ENCODE measurements at regions of chrX and their contacts with region 1.

Region 1: GRCh38 chrX:24150051-24150790 is 692 bp downstream of the ZFX start:
- DNase-seq: peak; percentile 76
- H3K4me3 Mint-ChIP-seq: peak overlapping the region; percentile 95
- H3K27ac Mint-ChIP-seq: peak overlapping the region; percentile 92
- H3K4me1 Mint-ChIP-seq: peaks cover 64% of the 10 kb centered on the region
- H3K27me3 Mint-ChIP-seq: no peaks in the 10 kb centered on the region

Region 2: DNA sequence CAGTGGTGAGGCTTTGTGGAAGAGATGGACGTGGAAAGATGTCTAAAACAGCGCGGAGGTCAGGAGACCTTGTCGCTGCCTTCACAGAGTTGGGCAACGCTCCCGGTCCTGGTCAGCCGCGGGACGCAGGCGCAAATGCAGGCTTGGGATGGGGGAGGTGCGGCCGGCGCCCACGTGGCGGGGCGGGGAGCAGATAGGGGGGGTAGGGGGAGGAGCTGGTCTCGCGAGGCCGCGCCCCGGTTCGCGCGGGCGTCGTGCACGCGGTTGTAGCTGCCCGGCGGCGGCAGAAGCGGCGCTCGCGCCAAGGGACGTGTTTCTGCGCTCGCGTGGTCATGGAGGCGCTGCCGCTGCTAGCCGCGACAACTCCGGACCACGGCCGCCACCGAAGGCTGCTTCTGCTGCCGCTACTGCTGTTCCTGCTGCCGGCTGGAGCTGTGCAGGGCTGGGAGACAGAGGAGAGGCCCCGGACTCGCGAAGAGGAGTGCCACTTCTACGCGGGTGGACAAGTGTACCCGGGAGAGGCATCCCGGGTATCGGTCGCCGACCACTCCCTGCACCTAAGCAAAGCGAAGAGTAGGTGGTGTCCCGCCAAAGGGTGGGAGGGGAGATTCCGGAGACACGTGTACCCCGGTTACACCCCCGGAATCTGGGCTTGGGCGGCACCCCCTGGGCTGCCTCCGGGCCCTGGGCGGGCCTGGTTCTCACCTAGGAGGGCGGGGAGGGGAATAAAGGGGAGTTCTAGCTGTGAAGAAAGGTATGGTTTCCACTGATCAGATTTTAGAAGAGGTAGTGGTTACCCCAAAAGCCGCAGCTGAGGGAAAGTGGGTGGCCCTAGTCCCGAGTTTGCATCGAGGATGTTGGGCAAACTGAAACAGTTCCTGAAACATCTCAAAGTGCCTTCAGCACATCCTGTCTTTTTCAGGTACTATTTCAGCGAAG is 482.7 kb before region 1 on chrX and contains the start of gene PRDX4:
- intact Hi-C with region 1: loop called (anchors 5 kb)
- DNase-seq: peak; percentile 66
- H3K4me3 Mint-ChIP-seq: peak within 1 kb of the TSS; percentile 88
- H3K27ac Mint-ChIP-seq: peak within 1 kb of the TSS; percentile 94
- H3K4me1 Mint-ChIP-seq: peaks cover 37% of the 10 kb centered on the region
- H3K27me3 Mint-ChIP-seq: no peaks in the 10 kb centered on the region
- total RNA-seq, gene PRDX4: 75.5 and 83.2 TPM in 2 replicates

Region 3: GRCh38 chrX:23907498-23908218 is 242.6 kb before region 1 on chrX and contains the starts of genes APOO and CXorf58:
- intact Hi-C with region 1: loop called (anchors 1 kb)
- DNase-seq: peak; percentile 88
- H3K4me3 Mint-ChIP-seq: peak within 1 kb of the TSS; percentile 85
- H3K27ac Mint-ChIP-seq: peak within 1 kb of the TSS; percentile 89
- H3K4me1 Mint-ChIP-seq: peaks cover 13% of the 10 kb centered on the region
- H3K27me3 Mint-ChIP-seq: no peaks in the 10 kb centered on the region
- total RNA-seq, gene APOO: 29.0 and 30.0 TPM in 2 replicates
- total RNA-seq, gene CXorf58: not detected in 2 replicates

Region 4: DNA sequence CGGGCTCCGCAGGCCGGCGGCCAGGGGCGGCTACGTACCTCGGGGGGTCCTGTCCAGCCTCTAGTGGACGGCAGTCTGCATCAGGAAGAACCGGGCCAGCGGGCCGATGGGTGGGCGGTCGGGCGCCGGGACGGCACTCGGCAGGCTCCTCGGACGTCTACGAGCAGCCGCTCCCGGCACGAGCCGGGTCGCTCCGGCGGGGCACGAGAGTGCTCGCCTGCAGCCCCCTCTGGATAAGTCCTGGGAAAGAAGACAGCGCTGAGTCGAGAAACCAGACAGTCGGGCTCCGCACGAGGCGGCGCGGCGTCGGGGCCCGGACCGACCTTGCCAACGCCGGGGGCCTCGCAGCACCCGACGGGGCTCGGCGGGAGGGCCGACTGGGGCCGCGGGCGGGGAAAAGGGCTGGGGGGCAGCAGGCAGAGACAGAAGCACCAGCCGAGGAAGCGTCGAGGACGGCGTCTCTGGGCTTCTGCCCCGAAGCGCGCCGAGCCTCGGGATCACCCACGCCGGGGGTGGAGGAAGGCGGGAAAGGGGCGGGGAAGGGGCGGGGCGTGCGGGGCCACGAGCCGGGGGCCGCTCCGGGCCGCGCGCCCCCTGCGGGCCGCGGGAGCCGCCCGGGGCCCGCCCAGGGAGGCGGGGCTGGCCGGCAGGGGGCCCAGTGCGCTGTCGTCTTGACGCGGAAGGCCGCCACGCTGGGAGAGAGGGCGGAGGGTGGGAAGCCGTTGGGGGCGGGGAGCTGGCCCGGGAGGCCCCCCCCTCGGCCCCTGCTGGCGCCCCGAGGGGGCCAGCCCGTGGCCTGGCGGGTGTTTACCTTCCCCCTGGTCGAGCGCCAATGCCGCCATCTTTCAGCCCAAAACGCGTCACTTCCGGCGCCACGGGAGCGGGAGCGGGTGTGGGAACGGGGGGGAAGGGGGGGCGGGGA is 125.1 kb before region 1 on chrX:
- intact Hi-C with region 1: loop called (anchors 1 kb)
- DNase-seq: peak; percentile 72
- H3K4me3 Mint-ChIP-seq: peak overlapping the region; percentile 92
- H3K27ac Mint-ChIP-seq: peak overlapping the region; percentile 88
- H3K4me1 Mint-ChIP-seq: peaks cover 25% of the 10 kb centered on the region
- H3K27me3 Mint-ChIP-seq: no peaks in the 10 kb centered on the region

Region 5: DNA sequence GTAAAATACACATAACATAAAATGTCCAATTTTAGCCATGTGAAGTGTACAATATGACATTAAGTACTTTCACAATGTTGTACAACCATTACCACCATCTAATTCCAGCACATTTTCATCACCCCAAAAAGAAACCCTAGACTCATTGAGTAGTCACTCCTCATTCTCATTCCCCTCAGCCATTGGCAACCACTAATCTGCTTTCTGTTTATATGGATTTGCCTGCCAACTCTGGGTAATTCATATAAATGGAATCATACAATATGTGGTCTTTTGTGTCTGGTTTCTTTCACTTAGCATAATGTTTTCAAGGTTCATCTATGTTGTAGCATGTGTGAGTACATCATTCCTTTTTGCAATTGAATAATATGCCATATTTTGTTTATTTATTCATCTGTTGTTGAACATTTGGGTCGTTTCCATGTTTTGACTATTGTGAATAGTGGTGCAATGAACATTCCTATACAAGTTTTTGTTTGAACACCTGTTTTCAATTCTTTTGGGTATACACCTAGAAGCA is 52.4 kb before region 1 on chrX:
- intact Hi-C with region 1: loop called (anchors 5 kb)
- DNase-seq: no peak
- H3K4me3 Mint-ChIP-seq: no peak overlapping the region
- H3K27ac Mint-ChIP-seq: no peak overlapping the region
- H3K4me1 Mint-ChIP-seq: peaks cover 6% of the 10 kb centered on the region
- H3K27me3 Mint-ChIP-seq: no peaks in the 10 kb centered on the region

Region 6: DNA sequence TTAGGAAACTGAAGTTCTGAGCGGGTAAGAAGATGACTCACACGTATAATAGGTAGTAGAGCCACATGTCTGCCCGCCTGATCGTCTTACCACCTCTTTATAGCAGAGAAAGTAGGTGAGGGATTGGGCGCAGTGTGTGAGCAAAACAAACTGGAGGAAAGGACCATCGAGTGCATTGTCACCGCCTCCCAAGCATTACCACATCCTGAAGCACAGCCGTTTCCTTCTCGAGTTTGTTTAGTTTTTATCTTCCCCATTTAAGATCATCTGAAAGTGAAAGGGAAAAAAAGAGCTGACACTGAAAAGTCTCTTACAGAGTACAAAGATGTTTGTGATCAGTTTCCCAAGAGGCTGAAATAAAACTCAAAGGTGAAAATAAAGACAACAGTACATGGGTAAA is 329.7 kb after region 1 on chrX:
- intact Hi-C with region 1: loop called (anchors 5 kb)
- DNase-seq: peak; percentile 71
- H3K4me3 Mint-ChIP-seq: peak overlapping the region; percentile 65
- H3K27ac Mint-ChIP-seq: peak overlapping the region; percentile 92
- H3K4me1 Mint-ChIP-seq: peaks cover 45% of the 10 kb centered on the region
- H3K27me3 Mint-ChIP-seq: no peaks in the 10 kb centered on the region

Measured in activated T-helper 1 cell treated with anti-CD3 and anti-CD28 coated beads, Interleukin-12 subunit alpha, Interleukin-12 subunit beta, Interleukin-2, Interleukin-4 antibody, amounts not matched to agents 30 ng/mL and 10 ng/mL and 1 ng/mL, durations not matched to agents 14 hours and 24 hours and 36 hours (primary cell).